PC-9 (cell line): ENCODE measurements at regions of chr7 and their contacts with region 1.

Region 1: DNA sequence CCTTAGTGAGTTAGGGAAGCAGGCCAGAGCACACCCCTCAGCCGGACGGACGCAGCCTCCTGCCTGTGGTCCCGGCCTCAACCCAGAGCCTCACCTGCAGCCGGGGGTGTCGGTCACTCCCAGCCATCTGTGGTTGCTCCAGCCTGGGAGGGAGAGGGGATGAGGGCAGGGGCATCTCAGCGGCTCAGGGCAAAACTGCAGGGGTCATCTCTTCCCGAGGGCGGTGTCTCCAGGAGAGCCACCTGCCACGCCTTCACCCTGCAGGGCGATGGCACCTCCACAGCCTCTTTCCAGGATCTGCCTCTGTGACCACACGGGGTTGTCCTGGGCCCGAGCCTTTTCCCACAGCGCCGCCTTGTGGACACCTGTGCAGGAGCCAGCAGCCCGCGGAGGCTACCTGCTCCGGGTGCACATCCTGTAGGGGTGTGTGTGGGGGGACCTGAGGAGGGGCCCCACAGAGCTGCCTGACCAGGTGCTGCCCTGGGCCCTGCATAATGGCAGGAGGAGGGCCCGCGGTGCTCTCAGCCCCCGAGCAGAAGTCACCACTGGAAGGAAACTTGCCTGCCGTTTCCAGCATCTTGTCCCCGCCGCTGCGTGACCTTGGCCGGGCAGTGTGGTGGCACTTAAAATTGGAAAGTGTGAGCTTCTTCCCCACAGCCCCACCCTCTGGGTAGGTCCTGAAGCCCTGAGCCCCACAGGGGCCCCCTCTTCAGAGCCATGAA is 21.6 kb upstream of the AP5Z1 start:
- DNase-seq: peak; percentile 53 to 89
- H3K4me3 ChIP-seq: no peak overlapping the region
- H3K27ac ChIP-seq: no peak overlapping the region
- H3K4me1 ChIP-seq: no peaks in the 10 kb centered on the region
- H3K27me3 ChIP-seq: no peaks in the 10 kb centered on the region
- CTCF ChIP-seq: peak; percentile 96

Region 2: DNA sequence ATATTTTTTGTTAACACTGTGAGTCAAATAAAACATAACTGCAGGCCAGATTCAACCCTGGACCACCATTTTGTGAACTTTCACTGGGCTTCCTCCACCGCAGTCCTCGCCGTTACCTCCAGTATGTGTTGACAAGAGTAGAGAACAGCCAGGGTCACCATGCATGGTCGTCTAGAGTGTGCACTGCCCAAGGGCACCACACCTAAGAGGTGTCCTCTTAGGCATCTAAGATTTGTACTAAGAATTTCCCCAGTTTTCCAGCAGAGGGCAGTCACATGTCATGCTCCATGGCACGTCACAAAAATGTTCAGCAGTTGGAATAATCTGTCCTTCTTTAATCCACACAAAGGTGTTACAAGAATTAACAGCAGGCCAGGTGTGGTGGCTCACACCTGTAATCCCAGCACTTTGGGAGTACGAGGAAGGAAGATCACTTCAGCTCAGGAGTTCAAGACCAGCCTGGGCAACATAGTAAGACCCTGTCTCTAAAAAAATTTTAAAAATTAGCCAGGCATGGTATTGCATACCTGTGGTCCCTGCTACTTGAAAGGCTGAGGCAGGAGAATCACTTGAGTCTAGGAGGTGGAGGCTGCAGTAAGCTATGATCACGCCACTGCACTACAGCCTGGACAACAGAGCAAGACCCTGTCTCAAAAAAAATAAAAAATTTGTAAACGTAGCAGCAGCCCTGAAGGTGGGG is 143.0 kb before region 1 on chr7:
- CTCF ChIA-PET with region 1: no interaction called
- POLR2A ChIA-PET with region 1: no interaction called
- intact Hi-C with region 1: loop called (anchors 1 kb)
- DNase-seq: peak; percentile 66 to 71
- H3K4me3 ChIP-seq: no peak overlapping the region
- H3K27ac ChIP-seq: no peak overlapping the region
- H3K4me1 ChIP-seq: no peaks in the 10 kb centered on the region
- H3K27me3 ChIP-seq: peaks cover 36% of the 10 kb centered on the region
- CTCF ChIP-seq: peak; percentile 91

Region 3: DNA sequence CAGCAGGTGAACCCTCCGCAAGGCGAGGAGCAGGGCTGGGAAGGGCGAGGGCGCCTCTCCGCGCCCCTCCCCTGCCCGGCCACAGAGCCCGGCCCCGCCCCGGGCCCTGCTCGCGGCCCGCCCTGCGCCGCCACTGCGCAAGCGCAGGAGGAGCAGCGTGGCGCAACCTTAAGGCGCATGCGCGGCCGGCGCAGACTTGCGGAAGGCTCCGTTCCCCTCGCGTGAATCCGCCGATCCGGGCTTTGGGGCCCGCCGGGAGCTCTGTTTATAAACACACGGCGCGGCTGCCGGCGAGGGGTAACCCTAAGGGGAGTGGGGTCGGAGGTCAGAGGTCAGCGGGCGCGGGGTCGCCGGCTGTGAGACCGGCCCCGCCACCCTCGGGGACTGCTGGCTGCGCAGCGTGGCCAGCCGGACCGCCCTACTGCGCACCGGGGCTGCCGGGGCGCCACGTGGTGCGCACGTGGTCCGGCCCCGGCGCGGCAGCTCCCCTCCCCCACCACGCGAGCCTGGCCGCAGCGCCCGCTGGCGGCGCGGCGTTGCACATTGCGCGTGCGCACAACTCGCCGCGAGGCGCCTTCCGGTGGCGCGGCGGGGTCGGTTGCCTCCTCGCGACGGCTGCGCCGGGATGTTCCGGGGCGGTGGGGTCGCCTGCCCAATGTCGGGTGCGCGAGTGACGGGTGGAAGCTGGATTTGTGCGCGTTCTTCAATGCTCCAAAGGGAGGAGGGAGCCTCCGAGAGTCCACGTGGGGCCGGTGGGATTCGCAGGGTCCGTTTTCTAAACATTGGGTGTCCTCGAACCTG is 112.0 kb before region 1 on chr7:
- CTCF ChIA-PET with region 1: no interaction called
- POLR2A ChIA-PET with region 1: no interaction called
- intact Hi-C with region 1: loop called (anchors 2 kb)
- DNase-seq: peak; percentile 84 to 99
- H3K4me3 ChIP-seq: peak overlapping the region; percentile 69
- H3K27ac ChIP-seq: peak overlapping the region; percentile 92
- H3K4me1 ChIP-seq: peaks cover 6% of the 10 kb centered on the region
- H3K27me3 ChIP-seq: no peaks in the 10 kb centered on the region
- CTCF ChIP-seq: no peak; the same call in 1 of the 2 replicates

Region 4: DNA sequence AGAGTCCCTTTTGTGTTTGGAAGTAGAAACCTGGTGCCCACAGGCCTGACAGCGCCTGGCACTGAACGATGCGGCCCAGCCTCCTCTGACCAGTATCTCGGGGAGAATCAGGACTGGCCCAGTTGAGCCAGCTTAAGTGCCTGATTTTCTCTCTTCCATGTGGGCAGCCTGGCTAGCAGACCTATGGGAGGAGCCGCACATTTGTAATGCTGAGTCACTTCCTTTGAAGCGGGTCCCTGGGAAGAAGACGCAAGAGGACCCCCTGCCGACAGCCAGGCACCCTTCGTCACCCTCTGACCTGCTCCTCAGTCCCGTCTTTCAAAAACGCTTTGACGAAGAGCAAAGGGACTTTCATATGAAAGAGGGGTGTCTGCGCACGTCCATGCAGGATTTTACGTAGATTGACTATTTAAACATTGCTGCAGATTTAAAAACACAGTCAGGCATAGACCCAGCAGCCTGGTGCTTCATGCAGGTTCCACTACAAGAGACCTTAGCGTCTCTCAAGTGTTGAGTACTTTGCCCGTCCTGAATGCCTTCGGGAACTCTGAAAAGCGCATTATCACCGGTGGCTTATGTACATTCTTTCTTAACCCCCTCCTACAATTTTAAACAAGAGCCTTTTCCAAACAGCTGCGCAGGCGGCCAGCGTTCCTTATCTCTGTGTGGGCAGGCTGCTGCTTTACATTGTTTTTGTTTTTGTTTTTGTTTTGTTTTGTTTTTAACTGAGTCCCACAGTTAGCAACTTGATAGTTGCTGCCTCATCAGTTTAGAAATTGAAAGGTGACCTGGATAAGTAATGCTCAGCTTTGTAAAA is 15.0 kb before region 1 on chr7:
- CTCF ChIA-PET with region 1: no interaction called
- POLR2A ChIA-PET with region 1: no interaction called
- intact Hi-C with region 1: no loop called
- DNase-seq: peak in 1 of 2 experiments; percentile 68
- H3K4me3 ChIP-seq: no peak overlapping the region
- H3K27ac ChIP-seq: peak overlapping the region; percentile 47
- H3K4me1 ChIP-seq: peaks cover 27% of the 10 kb centered on the region
- H3K27me3 ChIP-seq: no peaks in the 10 kb centered on the region
- CTCF ChIP-seq: no peak

Region 5: DNA sequence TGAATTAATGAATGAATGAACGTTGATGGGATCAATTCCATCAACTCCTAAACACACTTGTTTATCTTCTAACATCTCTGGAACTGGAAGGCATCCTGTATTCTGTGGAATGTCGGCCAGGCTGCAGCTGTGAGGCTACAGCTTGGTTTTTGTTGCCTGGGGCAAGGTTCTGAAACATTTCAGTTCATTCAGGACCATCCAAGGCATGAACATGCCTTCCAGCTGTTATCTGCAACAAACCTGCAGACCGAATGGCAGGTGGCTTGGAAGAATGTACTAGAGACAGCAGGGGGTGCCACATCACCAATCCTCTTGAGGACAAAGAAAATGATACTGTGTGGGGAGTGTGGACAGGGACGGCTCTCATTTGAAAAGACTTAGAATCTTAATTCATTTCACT is 95.5 kb after region 1 on chr7:
- CTCF ChIA-PET with region 1: interaction called, 10 read pairs
- POLR2A ChIA-PET with region 1: no interaction called
- intact Hi-C with region 1: no loop called
- DNase-seq: peak in 1 of 2 experiments; percentile 17
- H3K4me3 ChIP-seq: no peak overlapping the region
- H3K27ac ChIP-seq: no peak overlapping the region
- H3K4me1 ChIP-seq: no peaks in the 10 kb centered on the region
- H3K27me3 ChIP-seq: peaks cover 76% of the 10 kb centered on the region
- CTCF ChIP-seq: peak; percentile 53

Region 6: GRCh38 chr7:4951903-4952636 is 198.2 kb after region 1 on chr7:
- CTCF ChIA-PET with region 1: no interaction called
- POLR2A ChIA-PET with region 1: no interaction called
- intact Hi-C with region 1: no loop called
- DNase-seq: peak in 1 of 2 experiments; percentile 20
- H3K4me3 ChIP-seq: no peak overlapping the region
- H3K27ac ChIP-seq: no peak overlapping the region
- H3K4me1 ChIP-seq: no peaks in the 10 kb centered on the region
- H3K27me3 ChIP-seq: peaks cover 89% of the 10 kb centered on the region
- CTCF ChIP-seq: no peak

Region 7: GRCh38 chr7:5064391-5065106 is 310.7 kb after region 1 on chr7:
- CTCF ChIA-PET with region 1: interaction called, 10 read pairs
- POLR2A ChIA-PET with region 1: interaction called, 3 read pairs
- intact Hi-C with region 1: no loop called
- DNase-seq: no peak
- H3K4me3 ChIP-seq: 0 out of 2 replicates have a peak overlapping the region, but pooled peaks have one; percentile 22
- H3K27ac ChIP-seq: no peak overlapping the region
- H3K4me1 ChIP-seq: no peaks in the 10 kb centered on the region
- H3K27me3 ChIP-seq: no peaks in the 10 kb centered on the region
- CTCF ChIP-seq: no peak